Endothelial cell of umbilical vein (primary cell): ENCODE measurements at regions of chr1 and their contacts with region 1.

Region 1: DNA sequence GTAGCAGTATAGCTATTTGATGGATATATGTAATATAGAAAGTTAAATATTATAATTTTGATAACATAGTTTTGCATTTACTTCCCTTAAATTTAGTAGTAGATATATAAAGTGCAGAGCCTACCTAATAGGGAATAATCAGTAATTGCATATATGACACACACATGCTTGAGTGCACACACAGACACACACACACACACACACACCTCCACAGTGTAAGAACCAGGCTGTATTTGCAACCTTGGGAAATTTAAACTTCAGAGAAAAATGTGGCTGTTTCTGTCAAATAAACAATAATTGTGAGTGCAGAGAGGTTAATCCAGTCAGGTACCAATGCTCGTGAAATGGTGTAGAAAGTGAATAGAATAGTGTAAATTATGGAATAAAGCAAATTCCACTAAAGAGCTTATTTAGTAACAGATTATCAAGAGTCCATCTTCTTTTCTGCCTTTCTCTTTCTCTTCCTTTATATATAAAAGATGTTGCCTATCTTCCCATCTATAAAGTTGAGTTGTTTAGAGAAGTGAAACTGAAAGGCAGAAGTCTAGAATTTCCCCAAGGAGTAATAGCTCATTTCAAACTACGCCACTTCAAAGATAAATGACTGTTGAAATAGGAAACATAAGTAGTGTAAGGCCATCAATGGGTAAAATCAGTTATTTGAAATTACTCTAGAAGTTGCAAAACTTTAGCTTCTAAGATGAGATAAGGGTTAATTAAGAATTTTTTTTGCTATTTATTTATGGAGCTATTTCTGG is 273.7 kb downstream of the SRGAP2C start:
- DNase-seq: no peak
- H3K4me3 ChIP-seq: no peak overlapping the region
- H3K27ac ChIP-seq: no peak overlapping the region
- H3K4me1 ChIP-seq: no peaks in the 10 kb centered on the region
- H3K27me3 ChIP-seq: no peaks in the 10 kb centered on the region
- CTCF ChIP-seq: no peak
- POLR2A ChIP-seq: no peak

Region 2: DNA sequence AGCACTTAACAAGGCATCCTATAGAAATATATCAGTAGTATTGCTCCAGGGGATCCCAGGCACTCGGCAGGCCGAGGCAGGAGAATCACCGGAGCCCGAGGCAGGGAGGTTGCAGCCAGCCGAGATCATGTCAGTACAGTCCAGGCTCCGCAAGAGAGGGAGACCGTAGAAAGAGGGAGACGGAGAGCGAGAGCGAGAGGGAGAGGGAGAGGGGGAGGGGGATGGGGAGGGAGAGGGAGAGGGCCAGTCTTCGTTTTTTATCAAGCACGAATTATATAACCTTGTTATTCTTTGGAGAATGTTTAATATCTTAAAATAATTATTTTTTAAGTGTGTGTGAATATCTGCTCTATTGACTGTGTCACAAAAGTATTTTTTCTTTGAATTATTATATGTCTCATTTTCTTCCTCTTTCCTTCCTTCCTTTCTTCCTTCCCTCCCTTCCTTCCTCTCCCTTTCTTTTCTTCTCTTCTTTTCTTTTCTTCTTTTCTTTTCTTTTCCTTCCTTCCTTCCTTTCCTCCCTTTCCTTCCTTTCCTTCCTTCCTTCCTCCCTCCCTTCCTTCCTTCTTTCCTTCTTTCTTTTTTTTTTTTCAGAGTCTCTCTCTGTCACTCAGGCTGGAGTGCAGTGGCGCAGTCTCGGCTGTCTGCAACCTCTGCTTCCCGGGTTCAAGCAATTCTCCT is 40.0 kb before region 1 on chr1:
- CTCF ChIA-PET with region 1: no interaction called
- POLR2A ChIA-PET with region 1: no interaction called
- dilution Hi-C with region 1: no loop called
- intact Hi-C with region 1: loop called (anchors 5 kb)
- DNase-seq: no peak
- H3K4me3 ChIP-seq: no peak overlapping the region
- H3K27ac ChIP-seq: no peak overlapping the region
- H3K4me1 ChIP-seq: peaks cover 5% of the 10 kb centered on the region
- H3K27me3 ChIP-seq: no peaks in the 10 kb centered on the region
- CTCF ChIP-seq: no peak
- POLR2A ChIP-seq: no peak